Activated naive CD4-positive, alpha-beta T cell treated with anti-CD3 and anti-CD28 coated beads for 36 hours (primary cell): ENCODE measurements at regions of chr18 and their contacts with region 1.

Region 1: DNA sequence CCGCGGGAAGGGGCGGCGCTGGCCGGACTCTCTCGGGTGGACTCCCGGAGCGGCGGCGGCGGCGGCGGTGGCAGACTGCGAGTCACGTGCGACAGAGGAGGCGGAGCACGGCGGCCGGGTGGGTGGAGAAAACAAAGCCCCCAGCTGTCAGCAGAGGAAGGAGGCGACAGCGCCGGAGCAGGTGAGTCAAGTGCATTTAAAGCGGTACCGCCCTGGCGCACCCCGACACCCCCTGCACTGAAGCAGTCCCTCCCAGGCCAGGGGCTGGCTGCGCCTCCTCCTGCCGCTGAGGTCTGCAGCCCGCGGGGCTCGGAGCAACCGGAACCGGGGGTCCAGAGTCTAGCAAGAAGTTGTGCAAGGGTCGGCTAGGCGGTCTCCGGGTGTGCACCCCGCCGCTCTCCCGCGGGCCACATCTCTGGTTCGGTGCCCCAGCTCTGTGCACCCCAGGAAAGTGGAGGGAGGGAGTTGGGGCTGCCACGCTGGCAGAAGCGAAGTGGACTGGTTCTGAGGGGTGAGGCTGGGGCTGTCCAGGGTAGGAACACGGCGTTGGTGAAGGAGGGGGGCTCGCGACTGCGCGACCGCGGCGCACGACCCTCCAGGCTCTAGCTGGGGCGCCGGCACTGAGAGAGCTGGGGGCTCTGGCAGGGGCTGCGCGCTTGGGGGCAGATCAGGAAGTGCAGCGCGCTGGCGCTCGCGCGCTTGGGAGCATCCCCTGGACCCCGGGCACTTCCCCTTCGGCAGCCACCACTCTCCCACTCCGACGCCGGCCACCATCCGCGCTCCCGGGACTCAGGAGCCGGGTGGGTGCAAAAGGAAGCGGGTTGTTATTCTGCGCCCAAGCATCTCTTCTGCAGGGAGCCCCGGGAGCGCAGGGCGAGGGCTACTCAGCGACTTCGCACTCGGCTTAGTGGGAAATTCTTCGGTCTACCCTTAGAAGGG is 64.0 kb upstream of the MAPRE2 start:
- DNase-seq: peak; percentile 79
- H3K4me3 Mint-ChIP-seq: peak overlapping the region; percentile 85
- H3K27ac Mint-ChIP-seq: no peak overlapping the region
- H3K4me1 Mint-ChIP-seq: peaks cover 23% of the 10 kb centered on the region
- H3K27me3 Mint-ChIP-seq: peaks cover 5% of the 10 kb centered on the region

Region 2: DNA sequence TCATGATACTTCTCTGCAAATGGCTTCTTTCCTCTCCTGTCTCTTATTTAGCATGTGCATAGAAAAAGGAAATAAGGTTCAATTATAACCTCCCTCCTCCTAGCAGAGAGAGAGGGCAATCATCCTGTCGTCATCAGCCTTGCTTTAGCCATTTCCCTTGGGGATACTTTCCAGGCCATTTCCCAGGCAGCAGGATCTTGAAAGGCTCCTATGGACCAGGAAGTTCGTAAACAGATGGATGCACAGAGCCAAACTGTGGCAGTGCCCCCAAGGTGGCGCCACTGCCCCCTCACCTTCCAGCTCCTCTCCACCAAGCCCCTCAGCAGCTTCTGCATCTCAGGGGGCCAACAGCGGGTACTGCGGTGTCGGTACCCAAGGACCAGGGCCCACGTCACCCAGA is 109.6 kb before region 1 on chr18:
- CTCF ChIA-PET with region 1: interaction called, 6 read pairs
- intact Hi-C with region 1: loop called (anchors 1 kb)
- DNase-seq: no peak
- H3K4me3 Mint-ChIP-seq: no peak overlapping the region
- H3K27ac Mint-ChIP-seq: peak overlapping the region; percentile 53
- H3K4me1 Mint-ChIP-seq: peaks cover 51% of the 10 kb centered on the region
- H3K27me3 Mint-ChIP-seq: no peaks in the 10 kb centered on the region

Region 3: DNA sequence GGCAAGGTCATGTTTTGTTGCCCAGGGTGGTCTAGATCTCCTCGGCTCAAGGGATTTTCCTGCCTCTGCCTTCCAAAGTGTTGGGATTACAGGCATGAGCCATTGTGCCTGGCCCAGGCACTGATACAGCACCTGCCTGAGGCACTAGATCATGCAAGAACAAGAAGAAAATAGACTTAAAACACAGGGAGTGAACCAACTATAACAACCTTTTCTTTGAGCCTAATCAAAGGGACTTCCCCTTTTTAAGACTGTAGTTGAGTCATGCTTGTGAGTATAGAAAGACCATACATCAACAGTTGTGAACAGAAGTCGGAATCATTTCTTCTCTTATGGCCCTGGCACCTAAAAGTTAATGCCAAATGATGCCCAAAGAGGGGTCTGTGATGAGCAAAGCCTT is 16.1 kb after region 1 on chr18:
- CTCF ChIA-PET with region 1: interaction called, 3 read pairs
- intact Hi-C with region 1: loop called (anchors 2 kb)
- DNase-seq: no peak
- H3K4me3 Mint-ChIP-seq: no peak overlapping the region
- H3K27ac Mint-ChIP-seq: no peak overlapping the region
- H3K4me1 Mint-ChIP-seq: peaks cover 9% of the 10 kb centered on the region
- H3K27me3 Mint-ChIP-seq: no peaks in the 10 kb centered on the region

Region 4: GRCh38 chr18:35106845-35107148 is 129.6 kb after region 1 on chr18:
- CTCF ChIA-PET with region 1: no interaction called
- intact Hi-C with region 1: loop called (anchors 2 kb)
- DNase-seq: no peak
- H3K4me3 Mint-ChIP-seq: no peak overlapping the region
- H3K27ac Mint-ChIP-seq: no peak overlapping the region
- H3K4me1 Mint-ChIP-seq: peaks cover 53% of the 10 kb centered on the region
- H3K27me3 Mint-ChIP-seq: no peaks in the 10 kb centered on the region

Region 5: DNA sequence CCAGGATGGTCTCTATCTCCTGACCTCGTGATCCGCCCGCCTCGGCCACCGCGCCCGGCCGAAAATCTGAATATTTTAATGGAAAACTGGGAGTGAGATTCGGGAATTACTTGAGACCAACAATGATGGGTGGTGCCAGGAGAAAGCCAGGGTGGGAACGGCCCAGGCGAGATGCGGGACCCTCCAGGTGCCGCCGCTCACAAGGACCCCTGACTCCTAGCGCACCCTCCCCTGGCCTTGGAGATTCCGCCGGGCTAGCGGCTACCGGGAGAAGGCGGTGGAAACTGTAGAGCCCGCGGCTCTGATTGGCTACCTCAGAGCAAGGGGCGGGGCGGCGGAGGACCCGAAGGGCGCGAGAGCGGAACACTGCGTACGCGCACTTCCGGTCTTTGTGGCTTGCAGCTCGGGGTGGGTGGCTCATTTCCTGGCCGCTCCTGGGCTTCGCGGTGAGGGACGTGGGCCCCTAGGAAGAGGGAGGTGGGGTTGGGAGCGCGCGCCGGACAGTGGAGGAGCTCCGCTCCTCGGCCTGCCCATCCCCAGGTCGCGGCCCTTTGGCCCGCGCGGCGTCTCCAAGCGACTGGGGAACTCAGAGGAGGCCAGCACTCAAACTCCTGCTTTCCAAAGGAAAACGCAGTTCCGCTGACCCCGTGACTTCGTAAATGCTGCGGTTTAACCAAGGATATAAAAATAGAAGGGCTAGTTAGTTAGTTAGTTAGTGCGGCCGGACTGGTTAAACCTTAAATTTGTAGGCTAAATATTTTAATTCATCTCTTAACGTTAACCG is 263.7 kb after region 1 on chr18 and contains the start of gene ZNF397:
- CTCF ChIA-PET with region 1: no interaction called
- intact Hi-C with region 1: loop called (anchors 1 kb)
- DNase-seq: peak; percentile 98
- H3K4me3 Mint-ChIP-seq: peak within 1 kb of the TSS; percentile 94
- H3K27ac Mint-ChIP-seq: peak within 1 kb of the TSS; percentile 99
- H3K4me1 Mint-ChIP-seq: peaks cover 38% of the 10 kb centered on the region
- H3K27me3 Mint-ChIP-seq: no peaks in the 10 kb centered on the region
- total RNA-seq, gene ZNF397: 22.6 to 23.2 TPM

Region 6: GRCh38 chr18:35786365-35787042 is 809.3 kb after region 1 on chr18:
- CTCF ChIA-PET with region 1: no interaction called
- intact Hi-C with region 1: no loop called
- DNase-seq: no peak
- H3K4me3 Mint-ChIP-seq: no peak overlapping the region
- H3K27ac Mint-ChIP-seq: no peak overlapping the region
- H3K4me1 Mint-ChIP-seq: no peaks in the 10 kb centered on the region
- H3K27me3 Mint-ChIP-seq: peaks cover 13% of the 10 kb centered on the region